Vagina (tissue), 2 donors: ENCODE measurements at regions of chr21 and their contacts with region 1.

Region 1: GRCh38 chr21:25895565-25896205 is 160.9 kb downstream of the GABPA start:
- DNase-seq: no peak
- H3K4me3 ChIP-seq: no peak overlapping the region
- H3K27ac ChIP-seq: no peak overlapping the region
- H3K4me1 ChIP-seq: peaks cover 3% of the 10 kb centered on the region
- H3K27me3 ChIP-seq: no peaks in the 10 kb centered on the region
- CTCF ChIP-seq: peak; percentile 26 to 38 (median 26)
- POLR2A ChIP-seq: no peak

Region 2: GRCh38 chr21:26170471-26171257 is 275.0 kb after region 1 on chr21 and contains the start of gene APP:
- intact Hi-C with region 1: loop called (anchors 5 kb)
- DNase-seq: no peak
- H3K4me3 ChIP-seq: peak within 1 kb of the TSS; percentile 87 to 97
- H3K27ac ChIP-seq: peak within 1 kb of the TSS; percentile 90
- H3K4me1 ChIP-seq: peaks cover 27% of the 10 kb centered on the region
- H3K27me3 ChIP-seq: no peaks in the 10 kb centered on the region
- CTCF ChIP-seq: peak; percentile 83 to 98 (median 87)
- POLR2A ChIP-seq: peak in 1 of 2 donors; percentile 90
- total RNA-seq, gene APP: 315 TPM